B cell (primary cell): ENCODE measurements at regions of chr7 and their contacts with region 1.

Region 1: DNA sequence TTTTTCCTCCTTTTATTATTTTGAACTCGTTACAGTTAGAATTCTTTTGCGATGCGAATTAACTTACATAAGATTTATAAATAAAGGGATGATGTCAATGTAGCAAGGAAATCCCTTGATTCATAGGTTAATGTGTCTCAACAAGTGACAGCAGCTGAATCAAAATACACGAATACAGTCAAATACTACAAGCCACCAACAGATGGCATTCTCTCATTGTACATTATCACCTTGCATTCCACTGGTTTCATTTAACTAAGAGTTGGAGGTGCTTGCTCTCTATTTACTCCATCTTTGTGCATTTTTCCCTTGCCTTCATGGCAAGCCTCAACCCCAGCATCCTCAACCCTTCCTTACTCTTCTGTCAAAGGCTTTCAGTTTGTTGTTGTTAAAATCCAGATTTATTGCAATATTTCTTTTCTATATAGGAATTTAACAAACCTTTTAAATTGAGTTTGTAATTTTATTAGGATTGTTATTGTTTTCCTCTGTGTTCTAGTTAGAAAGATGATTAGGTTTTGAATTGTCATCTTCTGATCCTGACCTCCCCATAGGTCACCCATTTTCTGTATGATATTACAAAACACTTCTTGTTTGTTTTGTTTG is 78.3 kb downstream of the SLC25A40 start:
- DNase-seq: peak; percentile 56
- ATAC-seq: peak; percentile 69
- H3K4me3 ChIP-seq: no peak overlapping the region
- H3K4me3 Mint-ChIP-seq: no peak overlapping the region
- H3K27ac ChIP-seq: no peak overlapping the region
- H3K27ac Mint-ChIP-seq: no peak overlapping the region
- H3K4me1 ChIP-seq: no peaks in the 10 kb centered on the region
- H3K4me1 Mint-ChIP-seq: no peaks in the 10 kb centered on the region
- H3K27me3 ChIP-seq: no peaks in the 10 kb centered on the region
- H3K27me3 Mint-ChIP-seq: peaks cover 8% of the 10 kb centered on the region
- CTCF ChIP-seq: peak; percentile 73

Region 2: GRCh38 chr7:87506246-87507180 is 291.4 kb before region 1 on chr7:
- CTCF ChIA-PET with region 1: interaction called, 4 read pairs
- POLR2A ChIA-PET with region 1: no interaction called
- intact Hi-C with region 1: loop called (anchors 10 kb)
- DNase-seq: peak; percentile 10
- ATAC-seq: peak; percentile 17
- H3K4me3 ChIP-seq: no peak overlapping the region
- H3K4me3 Mint-ChIP-seq: no peak overlapping the region
- H3K27ac ChIP-seq: peak overlapping the region in 1 of 2 donors; percentile 16
- H3K27ac Mint-ChIP-seq: peak overlapping the region; percentile 8
- H3K4me1 ChIP-seq: peaks cover 18 to 19% of the 10 kb centered on the region in 2 donors
- H3K4me1 Mint-ChIP-seq: peaks cover 29% of the 10 kb centered on the region
- H3K27me3 ChIP-seq: no peaks in the 10 kb centered on the region
- H3K27me3 Mint-ChIP-seq: no peaks in the 10 kb centered on the region
- CTCF ChIP-seq: peak; percentile 53

Region 3: DNA sequence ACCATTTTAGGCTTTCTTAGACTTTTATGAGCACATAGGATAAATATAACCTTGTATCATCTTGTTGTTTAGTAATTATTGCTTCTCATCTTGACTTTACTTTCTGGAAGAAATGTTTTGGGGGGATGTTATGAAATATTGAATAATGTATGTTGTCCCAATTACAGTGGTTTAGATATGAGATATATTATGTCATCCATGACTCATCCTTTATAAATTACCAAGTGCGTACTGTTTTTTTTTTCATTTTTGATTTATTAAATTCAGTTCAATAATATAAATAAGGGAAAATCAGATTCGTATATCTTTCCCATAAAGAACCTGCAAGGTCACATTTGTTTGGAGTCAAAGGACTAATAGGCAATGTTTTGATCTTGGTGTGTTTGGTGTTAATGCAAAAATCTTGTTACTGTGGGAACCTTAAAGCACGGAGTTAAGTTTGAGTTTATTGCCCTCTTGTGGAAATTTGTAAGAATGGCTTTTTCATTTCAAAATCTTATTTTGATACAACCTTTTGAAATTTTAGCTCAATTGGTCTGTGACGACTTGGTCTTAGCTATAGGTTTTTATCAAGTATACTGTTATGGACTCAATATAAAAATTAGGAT is 313.3 kb after region 1 on chr7:
- CTCF ChIA-PET with region 1: interaction called, 11 read pairs
- POLR2A ChIA-PET with region 1: no interaction called
- intact Hi-C with region 1: loop called (anchors 1 kb)
- DNase-seq: peak; percentile 24
- ATAC-seq: no peak
- H3K4me3 ChIP-seq: no peak overlapping the region
- H3K4me3 Mint-ChIP-seq: no peak overlapping the region
- H3K27ac ChIP-seq: no peak overlapping the region
- H3K27ac Mint-ChIP-seq: no peak overlapping the region
- H3K4me1 ChIP-seq: no peaks in the 10 kb centered on the region
- H3K4me1 Mint-ChIP-seq: no peaks in the 10 kb centered on the region
- H3K27me3 ChIP-seq: no peaks in the 10 kb centered on the region
- H3K27me3 Mint-ChIP-seq: peaks cover 4% of the 10 kb centered on the region
- CTCF ChIP-seq: peak; percentile 69

Region 4: DNA sequence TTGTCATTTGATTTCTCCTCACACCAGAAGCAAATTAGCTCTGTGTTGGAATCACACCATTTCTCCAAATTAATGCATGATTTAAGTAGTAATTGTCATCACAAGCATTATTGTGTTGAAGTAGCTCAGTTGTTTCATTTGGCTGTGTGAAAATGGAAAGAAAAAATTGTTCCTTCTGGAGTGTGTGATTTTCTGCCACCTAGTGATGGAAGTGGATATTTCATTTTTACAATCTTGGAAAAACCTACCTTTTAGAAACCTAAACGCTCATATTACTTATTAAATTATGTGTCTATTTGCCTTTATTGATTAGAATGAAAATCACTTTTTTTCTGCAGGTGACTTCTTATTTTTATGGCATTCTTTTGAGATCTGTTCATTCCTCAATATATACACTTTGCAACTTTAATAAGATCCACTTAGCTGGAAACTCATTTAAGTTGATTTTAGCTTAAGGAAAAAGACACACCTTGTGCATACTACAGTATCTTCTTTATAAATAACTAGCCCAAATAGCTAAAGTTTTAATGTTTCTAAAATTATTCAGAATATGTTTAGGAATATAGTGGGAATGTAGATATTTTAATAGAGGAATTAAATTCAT is 371.9 kb after region 1 on chr7:
- CTCF ChIA-PET with region 1: interaction called, 7 read pairs
- POLR2A ChIA-PET with region 1: no interaction called
- intact Hi-C with region 1: loop called (anchors 2 kb)
- DNase-seq: peak; percentile 6
- ATAC-seq: no peak
- H3K4me3 ChIP-seq: no peak overlapping the region
- H3K4me3 Mint-ChIP-seq: no peak overlapping the region
- H3K27ac ChIP-seq: no peak overlapping the region
- H3K27ac Mint-ChIP-seq: no peak overlapping the region
- H3K4me1 ChIP-seq: no peaks in the 10 kb centered on the region
- H3K4me1 Mint-ChIP-seq: no peaks in the 10 kb centered on the region
- H3K27me3 ChIP-seq: no peaks in the 10 kb centered on the region
- H3K27me3 Mint-ChIP-seq: no peaks in the 10 kb centered on the region
- CTCF ChIP-seq: peak; percentile 68